H1 (cell line): ENCODE measurements at regions of chr6 and their contacts with region 1.

Region 1: GRCh38 chr6:34015586-34015985 is 130.3 kb downstream of the GRM4 start:
- DNase-seq: no peak
- H3K4me3 ChIP-seq: no peak overlapping the region
- H3K27ac ChIP-seq: no peak overlapping the region
- H3K4me1 ChIP-seq: peaks cover 0 to 2% (median under 1%) of the 10 kb centered on the region in 4 experiments; a peak in 3 of 7 replicates
- H3K27me3 ChIP-seq: peaks cover 5 to 41% (median 35%) of the 10 kb centered on the region in 4 experiments
- CTCF ChIP-seq: no peak
- EP300 ChIP-seq: no peak
- POLR2A ChIP-seq: no peak
- RAD21 ChIP-seq: no peak

Region 2: DNA sequence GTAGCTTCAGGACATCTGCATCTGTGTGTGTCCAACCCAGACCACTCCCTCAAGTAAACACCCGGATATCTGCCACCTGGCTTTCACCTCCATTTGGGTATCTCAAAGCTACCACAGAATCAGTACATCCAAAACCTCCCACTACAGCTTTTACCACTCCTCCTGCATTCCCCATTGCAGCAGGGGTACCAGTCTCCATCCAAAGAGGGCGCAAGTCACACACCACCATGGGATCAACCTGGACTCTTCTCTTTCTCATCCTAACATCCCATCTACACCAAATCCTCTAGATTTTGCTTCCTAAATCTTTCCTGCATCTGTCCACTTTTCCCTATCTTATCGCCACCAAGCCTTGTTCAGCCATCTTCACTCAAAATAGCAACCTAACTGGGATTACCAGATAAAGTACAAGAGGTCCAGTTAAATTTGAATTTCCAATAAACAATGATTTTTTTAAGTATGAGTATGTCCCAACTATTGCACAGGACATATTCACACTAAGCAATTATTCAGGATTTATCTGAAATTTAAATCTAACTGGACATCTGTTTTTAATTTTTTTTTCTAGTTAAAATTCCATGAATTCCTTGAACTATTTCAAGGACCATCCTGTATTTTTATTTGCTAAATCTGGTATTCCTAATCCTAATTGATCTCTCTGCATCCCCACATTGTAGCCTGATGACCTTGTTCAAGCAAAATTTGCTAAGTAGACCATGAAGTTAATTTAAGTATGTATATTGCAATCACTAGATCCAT is 47.4 kb before region 1 on chr6:
- CTCF ChIA-PET with region 1: interaction called, 234 read pairs
- POLR2A ChIA-PET with region 1: interaction called, 4 read pairs
- DNase-seq: no peak
- H3K4me3 ChIP-seq: no peak overlapping the region
- H3K27ac ChIP-seq: no peak overlapping the region
- H3K4me1 ChIP-seq: peaks cover 0 to 2% (median 0%) of the 10 kb centered on the region in 4 experiments; a peak in 1 of 7 replicates
- H3K27me3 ChIP-seq: no peaks in the 10 kb centered on the region
- CTCF ChIP-seq: peak; percentile 86 to 95 (median 87)
- EP300 ChIP-seq: no peak
- POLR2A ChIP-seq: no peak
- RAD21 ChIP-seq: peak; percentile 87 to 89

Region 3: DNA sequence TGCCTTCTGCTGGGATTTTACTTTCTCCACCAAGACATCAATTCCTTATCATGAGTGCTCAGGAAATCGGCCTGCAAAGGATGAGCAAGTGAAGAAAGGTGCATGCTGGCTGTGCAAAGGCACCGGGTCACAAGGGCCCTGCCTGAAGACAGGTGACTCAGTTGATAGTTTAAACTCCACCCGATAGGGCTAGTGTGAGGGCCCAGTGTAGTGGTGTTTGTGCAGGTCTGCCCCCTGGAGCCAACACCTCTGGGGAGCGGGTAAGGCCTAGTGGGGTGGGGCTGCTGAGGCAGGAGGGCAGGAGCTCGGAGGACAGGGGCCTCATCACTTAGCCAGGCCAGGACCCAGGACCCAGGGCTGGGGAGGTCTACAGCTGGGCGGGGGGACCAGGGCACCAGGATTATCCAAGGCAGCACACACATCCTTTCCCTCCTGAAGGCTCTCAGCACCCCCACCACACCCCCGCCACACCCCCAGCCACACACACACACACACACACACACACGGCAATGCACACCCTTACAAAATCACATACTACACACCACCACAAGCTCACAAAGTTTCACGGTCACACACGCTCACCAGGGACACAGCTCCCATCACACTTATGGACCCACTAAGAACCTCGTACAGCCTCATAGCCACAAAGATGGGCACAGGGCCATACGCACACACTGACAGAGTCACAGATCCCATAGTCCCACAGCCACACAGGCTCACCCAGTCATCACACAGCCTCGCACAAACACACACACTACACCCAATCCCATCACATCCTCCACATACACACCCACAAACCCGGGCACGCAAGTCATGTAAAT is 54.9 kb after region 1 on chr6:
- CTCF ChIA-PET with region 1: no interaction called
- POLR2A ChIA-PET with region 1: no interaction called
- DNase-seq: no peak
- H3K4me3 ChIP-seq: no peak overlapping the region
- H3K27ac ChIP-seq: no peak overlapping the region
- H3K4me1 ChIP-seq: peaks cover 0 to 16% (median 10%) of the 10 kb centered on the region in 4 experiments; a peak in 6 of 7 replicates
- H3K27me3 ChIP-seq: no peaks in the 10 kb centered on the region; a peak in 1 of 7 replicates
- CTCF ChIP-seq: no peak
- EP300 ChIP-seq: no peak
- POLR2A ChIP-seq: no peak
- RAD21 ChIP-seq: no peak; a peak in 1 of 4 replicates